Posterior cingulate gyrus (tissue), 11 donors: ENCODE measurements at regions of chr13 and their contacts with region 1.

Region 1: DNA sequence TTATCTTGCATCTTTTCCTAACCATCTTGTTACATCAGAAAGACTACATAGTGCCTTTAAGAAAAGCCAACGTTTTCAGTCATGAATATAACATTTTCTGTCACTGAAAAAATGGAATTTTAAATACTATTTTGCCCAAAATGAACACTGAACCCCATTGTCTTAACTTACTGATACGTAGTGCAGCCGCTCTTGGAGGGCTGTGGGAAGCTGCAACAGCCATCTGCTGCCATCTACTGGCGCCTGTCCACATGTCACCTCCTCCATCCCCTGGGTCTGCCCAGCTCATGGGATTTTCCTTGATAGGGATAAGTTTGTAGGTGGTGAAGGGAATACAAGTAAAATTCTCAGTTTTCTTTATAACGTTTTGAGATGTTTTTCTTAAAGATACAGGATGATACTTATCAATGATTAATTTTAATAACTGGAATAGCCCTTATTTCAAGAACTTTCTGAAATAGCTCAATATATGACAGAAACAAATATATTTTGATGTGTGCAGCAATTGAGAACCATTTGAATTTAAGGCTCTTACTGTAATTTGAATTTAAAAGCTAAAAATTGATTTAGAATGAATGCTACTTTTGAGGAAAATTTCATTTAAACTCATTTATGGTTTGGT is 73.7 kb downstream of the GGACT start:
- DNase-seq: peak; percentile 66 to 97 (median 88)

Region 2: GRCh38 chr13:99656092-99656745 is 858.7 kb before region 1 on chr13:
- intact Hi-C with region 1: loop called (anchors 1 kb)
- DNase-seq: peak in 8 of 10 donors; percentile 58 to 95 (median 84)

Region 3: DNA sequence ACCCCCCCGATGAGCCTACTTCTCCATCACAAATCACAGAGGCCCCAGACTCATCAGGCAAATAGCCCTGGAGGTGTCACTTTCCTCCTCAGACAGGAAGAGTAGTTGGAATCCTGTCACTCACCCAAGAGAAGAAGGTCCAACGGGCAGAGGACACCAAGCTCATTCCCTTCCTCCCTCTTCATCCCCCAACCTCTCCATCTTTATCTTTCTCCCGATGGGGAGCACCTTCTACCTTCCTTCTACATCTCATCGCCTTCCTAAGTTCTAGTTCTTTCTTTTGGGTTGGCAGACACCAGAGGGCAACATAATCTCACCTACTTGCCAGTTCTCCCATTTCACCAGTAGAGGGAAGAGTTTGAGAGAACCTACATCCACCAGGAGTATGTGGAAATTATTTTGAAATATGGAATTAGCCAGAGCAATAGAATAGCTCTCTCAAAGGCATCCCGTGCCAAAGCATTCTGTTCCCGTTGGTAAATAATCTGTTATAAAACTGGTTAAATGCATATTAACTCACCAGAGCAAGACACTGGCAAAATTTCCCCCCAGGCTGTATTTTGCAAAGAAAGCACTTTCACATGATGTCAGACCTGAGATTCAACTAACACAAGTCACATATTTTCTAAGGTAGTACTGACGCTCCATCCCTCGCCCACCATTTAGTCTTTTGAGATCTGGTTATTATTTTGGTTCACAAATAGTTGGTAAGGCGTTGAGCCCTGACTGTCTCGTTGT is 598.4 kb before region 1 on chr13:
- intact Hi-C with region 1: loop called (anchors 1 kb)
- DNase-seq: no peak